Activated CD4-positive, alpha-beta T cell treated with anti-CD3 and anti-CD28 coated beads, Interleukin-2, amount 10 ng/mL, durations not matched to agents 24 days and 14 days (primary cell): ENCODE measurements at regions of chr13 and their contacts with region 1.

Region 1: GRCh38 chr13:111049802-111050538 is 65.1 kb upstream of the ARHGEF7 start:
- DNase-seq: no peak
- H3K4me3 Mint-ChIP-seq: no peak overlapping the region
- H3K27ac Mint-ChIP-seq: no peak overlapping the region
- H3K4me1 Mint-ChIP-seq: peaks cover 9% of the 10 kb centered on the region
- H3K27me3 Mint-ChIP-seq: peaks cover 15% of the 10 kb centered on the region

Region 2: GRCh38 chr13:110371550-110372465 is 678.2 kb before region 1 on chr13:
- intact Hi-C with region 1: no loop called
- DNase-seq: no peak
- H3K4me3 Mint-ChIP-seq: no peak overlapping the region
- H3K27ac Mint-ChIP-seq: no peak overlapping the region
- H3K4me1 Mint-ChIP-seq: no peaks in the 10 kb centered on the region
- H3K27me3 Mint-ChIP-seq: peaks cover 28% of the 10 kb centered on the region

Region 3: DNA sequence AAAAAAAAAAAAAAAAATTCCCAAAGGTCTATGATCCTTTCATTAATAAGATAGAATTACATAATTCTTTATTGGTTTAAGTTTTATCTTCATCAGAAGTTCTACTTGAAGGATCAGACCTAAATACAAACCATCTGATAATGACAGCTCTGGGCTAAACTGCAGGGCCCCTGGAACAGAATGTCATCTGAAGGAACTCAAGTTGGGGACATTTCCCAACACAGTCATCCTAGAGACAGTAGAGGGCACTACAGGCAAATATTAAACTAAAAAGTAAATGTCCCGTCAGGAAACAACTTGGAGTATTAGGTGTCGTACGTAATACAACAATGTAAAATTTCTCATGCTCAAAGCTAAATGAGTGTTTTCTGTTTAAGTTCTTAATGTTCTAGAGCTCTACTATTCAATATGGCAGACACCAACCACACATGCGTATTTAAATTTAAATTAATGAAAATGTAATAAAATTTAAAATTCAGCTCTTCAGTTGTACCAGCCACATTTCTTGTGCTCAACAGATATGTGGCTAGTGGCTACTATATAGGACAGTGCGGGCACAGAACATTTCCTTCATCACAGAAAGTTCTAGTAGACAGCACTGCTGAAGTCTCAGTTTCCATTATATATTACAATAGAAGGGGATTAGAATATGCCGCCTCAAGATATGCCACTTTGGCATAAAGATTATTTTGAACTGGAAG is 456.4 kb before region 1 on chr13:
- intact Hi-C with region 1: loop called (anchors 10 kb)
- DNase-seq: peak; percentile 69
- H3K4me3 Mint-ChIP-seq: no peak overlapping the region
- H3K27ac Mint-ChIP-seq: no peak overlapping the region
- H3K4me1 Mint-ChIP-seq: peaks cover 1% of the 10 kb centered on the region
- H3K27me3 Mint-ChIP-seq: peaks cover 23% of the 10 kb centered on the region

Region 4: GRCh38 chr13:110737555-110737954 is 312.4 kb before region 1 on chr13:
- intact Hi-C with region 1: no loop called
- DNase-seq: no peak
- H3K4me3 Mint-ChIP-seq: no peak overlapping the region
- H3K27ac Mint-ChIP-seq: no peak overlapping the region
- H3K4me1 Mint-ChIP-seq: no peaks in the 10 kb centered on the region
- H3K27me3 Mint-ChIP-seq: no peaks in the 10 kb centered on the region

Region 5: DNA sequence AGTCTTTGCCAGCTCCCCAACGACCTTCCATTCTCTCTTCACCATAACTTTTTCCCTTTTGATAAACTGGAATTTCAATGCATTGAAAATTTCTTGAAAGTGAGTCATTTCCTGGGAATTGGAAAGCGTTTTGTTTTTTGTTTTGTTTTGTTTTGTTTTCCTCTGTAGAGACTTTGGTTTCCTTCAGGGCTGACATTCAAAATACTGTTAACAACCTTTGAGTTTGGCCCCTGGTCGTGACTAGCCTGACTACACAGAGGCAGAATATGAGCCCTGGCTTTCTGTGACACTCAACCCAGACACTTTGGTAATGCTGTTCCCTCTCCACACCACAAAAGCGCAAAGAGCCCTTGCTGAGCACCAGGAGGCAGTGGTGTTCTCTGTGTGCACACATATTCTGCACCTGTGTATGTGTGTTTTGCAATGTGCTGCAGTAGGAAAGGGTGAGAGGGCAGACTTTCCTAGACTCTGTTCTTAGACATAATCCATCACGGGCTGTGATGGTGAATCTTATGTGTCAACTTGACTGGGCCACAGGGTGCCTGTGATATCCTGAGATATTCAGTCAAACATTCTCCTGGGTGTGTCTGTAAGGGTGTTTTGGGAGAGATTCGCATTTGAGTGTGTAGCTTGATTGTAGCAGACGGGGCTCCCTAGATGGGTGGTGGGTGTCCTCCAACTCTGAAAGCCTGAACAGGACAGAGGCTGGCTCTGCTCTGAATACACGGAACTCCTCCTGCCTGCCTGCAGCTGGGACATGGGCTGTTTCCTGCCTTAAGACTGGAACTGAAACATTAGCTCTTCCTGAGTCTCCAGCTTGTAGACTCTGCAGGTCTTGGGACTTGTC is 105.6 kb before region 1 on chr13:
- intact Hi-C with region 1: loop called (anchors 1 kb)
- DNase-seq: peak; percentile 81
- H3K4me3 Mint-ChIP-seq: no peak overlapping the region
- H3K27ac Mint-ChIP-seq: peak overlapping the region; percentile 20
- H3K4me1 Mint-ChIP-seq: peaks cover 33% of the 10 kb centered on the region
- H3K27me3 Mint-ChIP-seq: peaks cover 4% of the 10 kb centered on the region

Region 6: DNA sequence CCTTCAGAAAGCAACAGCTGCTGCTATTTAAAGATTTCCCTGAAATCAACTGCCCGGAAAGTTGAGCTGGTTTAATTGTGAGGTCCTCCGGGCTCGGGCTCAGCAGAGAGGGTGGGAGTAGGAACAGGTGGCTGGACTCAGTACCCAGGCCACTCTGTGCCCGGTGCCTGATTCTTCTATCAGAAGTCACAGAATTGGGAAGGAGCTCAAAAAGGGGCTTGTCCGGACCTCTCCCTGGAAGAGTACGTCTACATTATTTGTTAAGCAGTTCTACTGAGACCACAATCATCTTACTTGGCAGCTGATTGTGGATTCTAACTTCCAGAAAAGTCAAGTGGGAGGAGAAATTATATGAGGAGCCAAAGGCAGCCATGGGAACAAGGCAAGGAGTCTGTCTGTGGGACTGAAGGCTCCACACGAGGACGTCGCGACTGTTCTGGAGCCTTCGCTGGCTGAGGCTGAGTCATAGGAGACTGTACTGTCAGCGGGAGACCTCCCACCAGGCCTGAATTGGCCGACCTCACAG is 43.4 kb before region 1 on chr13:
- intact Hi-C with region 1: no loop called
- DNase-seq: no peak
- H3K4me3 Mint-ChIP-seq: no peak overlapping the region
- H3K27ac Mint-ChIP-seq: no peak overlapping the region
- H3K4me1 Mint-ChIP-seq: peaks cover 10% of the 10 kb centered on the region
- H3K27me3 Mint-ChIP-seq: peaks cover 26% of the 10 kb centered on the region